ENCODE measurements at regions of chr10 and their contacts with region 1.

Region 1: DNA sequence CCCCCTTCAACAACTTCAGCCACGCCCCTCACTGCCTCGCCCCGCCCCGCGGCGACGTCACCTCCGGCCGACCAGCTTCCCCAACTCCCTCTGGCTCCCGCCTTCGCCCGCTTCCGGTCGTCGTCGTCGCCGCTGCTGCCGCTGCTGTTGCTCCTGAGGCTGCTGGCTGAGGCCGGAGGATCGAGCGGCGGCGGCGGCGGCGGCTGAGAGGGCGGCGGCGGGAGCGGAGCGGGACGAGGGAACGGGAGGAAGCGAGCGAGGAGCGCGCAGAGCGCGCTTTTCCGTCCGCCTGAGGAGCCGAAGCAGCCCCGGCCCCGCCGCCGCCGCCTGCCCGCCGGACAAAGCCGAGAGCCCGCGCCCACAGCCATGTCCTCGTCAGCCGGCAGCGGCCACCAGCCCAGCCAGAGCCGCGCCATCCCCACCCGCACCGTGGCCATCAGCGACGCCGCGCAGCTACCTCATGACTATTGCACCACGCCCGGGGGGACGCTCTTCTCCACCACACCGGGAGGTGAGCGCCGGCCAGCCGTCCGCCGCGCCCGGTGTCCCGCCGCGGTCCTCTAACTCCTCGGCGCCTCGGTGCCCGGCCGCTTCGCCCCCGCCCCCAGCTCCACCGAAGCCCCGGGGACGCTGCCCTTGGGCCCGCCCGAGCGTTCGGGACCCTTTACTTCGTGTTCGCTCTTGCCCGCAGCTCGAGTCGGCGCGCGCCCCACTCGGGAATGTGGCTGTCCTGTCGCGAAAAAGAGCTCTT is at the start of gene EIF4EBP2:
- DNase-seq: peak; percentile 99
- H3K4me3 Mint-ChIP-seq: peak within 1 kb of the TSS; percentile 98
- H3K27ac Mint-ChIP-seq: peak within 1 kb of the TSS; percentile 90
- H3K4me1 Mint-ChIP-seq: peaks cover 37% of the 10 kb centered on the region
- H3K27me3 Mint-ChIP-seq: no peaks in the 10 kb centered on the region
- total RNA-seq, gene EIF4EBP2: 20.0 to 21.0 TPM

Region 2: DNA sequence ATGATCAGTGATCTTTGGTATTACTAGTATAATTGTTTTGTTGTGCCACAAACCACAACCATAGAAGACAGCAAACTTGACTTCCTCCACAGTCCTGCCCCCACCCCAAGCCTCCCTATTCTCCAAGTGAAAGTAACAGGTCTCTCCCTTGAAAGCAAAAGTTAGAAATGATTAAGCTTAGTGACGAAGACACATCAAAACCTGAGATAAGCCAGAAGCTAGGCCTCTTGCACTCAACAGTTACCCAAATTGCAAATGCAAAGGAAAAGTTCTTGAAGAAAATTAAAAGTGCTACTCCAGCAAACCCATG is 241.4 kb before region 1 on chr10:
- CTCF ChIA-PET with region 1: no interaction called
- intact Hi-C with region 1: loop called (anchors 5 kb)
- DNase-seq: peak; percentile 87
- H3K4me3 Mint-ChIP-seq: peak overlapping the region; percentile 20
- H3K27ac Mint-ChIP-seq: peak overlapping the region; percentile 95
- H3K4me1 Mint-ChIP-seq: peaks cover 65% of the 10 kb centered on the region
- H3K27me3 Mint-ChIP-seq: no peaks in the 10 kb centered on the region

Region 3: GRCh38 chr10:70265032-70265689 is 139.1 kb before region 1 on chr10:
- CTCF ChIA-PET with region 1: no interaction called
- intact Hi-C with region 1: no loop called
- DNase-seq: peak; percentile 35
- H3K4me3 Mint-ChIP-seq: no peak overlapping the region
- H3K27ac Mint-ChIP-seq: no peak overlapping the region
- H3K4me1 Mint-ChIP-seq: peaks cover 7% of the 10 kb centered on the region
- H3K27me3 Mint-ChIP-seq: peaks cover 2% of the 10 kb centered on the region

Region 4: GRCh38 chr10:70381471-70382421 is 22.5 kb before region 1 on chr10:
- CTCF ChIA-PET with region 1: interaction called, 7 read pairs
- intact Hi-C with region 1: loop called (anchors 1 kb)
- DNase-seq: peak; percentile 42
- H3K4me3 Mint-ChIP-seq: peak overlapping the region; percentile 84
- H3K27ac Mint-ChIP-seq: no peak overlapping the region
- H3K4me1 Mint-ChIP-seq: peaks cover 10% of the 10 kb centered on the region
- H3K27me3 Mint-ChIP-seq: peaks cover 2% of the 10 kb centered on the region

Region 5: GRCh38 chr10:70417568-70417967 is 13.4 kb after region 1 on chr10:
- CTCF ChIA-PET with region 1: interaction called, 3 read pairs
- intact Hi-C with region 1: loop called (anchors 1 kb)
- DNase-seq: no peak
- H3K4me3 Mint-ChIP-seq: no peak overlapping the region
- H3K27ac Mint-ChIP-seq: peak overlapping the region; percentile 23
- H3K4me1 Mint-ChIP-seq: peaks cover 29% of the 10 kb centered on the region
- H3K27me3 Mint-ChIP-seq: no peaks in the 10 kb centered on the region

Region 6: DNA sequence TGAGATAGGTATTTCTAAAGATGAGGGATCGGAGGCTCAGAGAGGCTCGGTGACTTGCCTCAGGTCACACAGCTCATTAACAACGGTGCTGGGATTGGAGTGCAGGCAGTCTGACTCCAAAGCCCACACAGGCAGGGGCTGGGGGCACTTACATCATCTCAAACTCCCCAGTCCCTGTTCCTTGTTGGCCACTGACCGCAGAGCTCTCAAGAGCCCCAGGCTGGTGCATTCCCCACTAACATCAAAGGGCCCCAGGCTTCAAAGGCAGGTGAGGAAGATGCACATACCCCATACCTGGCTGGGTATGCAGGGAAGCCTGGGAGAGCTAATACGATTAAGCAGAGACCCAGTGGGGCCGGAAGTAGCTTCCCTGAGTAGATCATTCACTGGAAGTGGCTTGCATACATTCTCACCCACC is 51.0 kb after region 1 on chr10:
- CTCF ChIA-PET with region 1: no interaction called
- intact Hi-C with region 1: no loop called
- DNase-seq: no peak
- H3K4me3 Mint-ChIP-seq: no peak overlapping the region
- H3K27ac Mint-ChIP-seq: no peak overlapping the region
- H3K4me1 Mint-ChIP-seq: peaks cover 5% of the 10 kb centered on the region
- H3K27me3 Mint-ChIP-seq: peaks cover 35% of the 10 kb centered on the region

Region 7: GRCh38 chr10:70493660-70494234 is 89.5 kb after region 1 on chr10:
- CTCF ChIA-PET with region 1: no interaction called
- intact Hi-C with region 1: no loop called
- DNase-seq: no peak
- H3K4me3 Mint-ChIP-seq: no peak overlapping the region
- H3K27ac Mint-ChIP-seq: no peak overlapping the region
- H3K4me1 Mint-ChIP-seq: peaks cover 15% of the 10 kb centered on the region
- H3K27me3 Mint-ChIP-seq: no peaks in the 10 kb centered on the region

Region 8: GRCh38 chr10:70503776-70504175 is 99.6 kb after region 1 on chr10:
- CTCF ChIA-PET with region 1: no interaction called
- intact Hi-C with region 1: no loop called
- DNase-seq: no peak
- H3K4me3 Mint-ChIP-seq: no peak overlapping the region
- H3K27ac Mint-ChIP-seq: no peak overlapping the region
- H3K4me1 Mint-ChIP-seq: no peaks in the 10 kb centered on the region
- H3K27me3 Mint-ChIP-seq: no peaks in the 10 kb centered on the region

Region 9: DNA sequence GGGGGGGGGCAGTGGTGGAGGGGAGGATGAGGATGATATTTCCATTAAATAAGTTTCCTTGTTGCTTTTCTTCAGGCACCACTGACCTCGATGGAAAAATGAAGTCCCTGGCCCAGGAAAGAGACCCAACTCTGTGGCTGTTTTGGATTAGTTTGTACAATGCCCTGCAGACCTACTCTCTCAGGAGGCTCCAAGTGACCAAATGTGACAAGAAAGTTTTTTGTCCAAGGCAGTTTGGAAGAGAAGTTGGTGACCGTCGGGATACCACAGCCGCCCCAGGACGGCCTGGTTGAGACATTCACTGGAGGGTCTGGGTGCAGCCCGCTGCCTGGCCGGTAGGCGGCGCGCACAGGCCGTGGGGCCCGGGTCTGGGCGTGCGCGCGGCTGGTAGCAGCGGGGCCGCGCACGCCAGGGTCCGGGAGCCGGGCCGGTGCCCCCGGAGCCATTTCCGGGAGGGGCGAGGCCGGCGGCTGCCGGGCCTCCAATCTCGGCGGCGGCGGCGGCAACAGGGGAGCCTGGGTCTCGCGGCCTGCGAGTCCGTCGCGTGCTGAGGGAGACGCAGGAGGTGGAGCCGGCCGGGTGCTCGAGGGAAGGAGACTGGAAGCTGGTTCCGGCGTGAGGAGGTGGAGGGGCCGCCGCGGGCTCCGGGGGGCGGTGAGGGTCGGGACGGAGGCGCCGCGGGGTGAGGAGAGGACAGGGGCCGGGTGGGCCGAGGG is 411.5 kb after region 1 on chr10 and contains the start of gene SGPL1:
- CTCF ChIA-PET with region 1: no interaction called
- intact Hi-C with region 1: loop called (anchors 1 kb)
- DNase-seq: peak; percentile 86
- H3K4me3 Mint-ChIP-seq: peak within 1 kb of the TSS; percentile 82
- H3K27ac Mint-ChIP-seq: peak within 1 kb of the TSS; percentile 76
- H3K4me1 Mint-ChIP-seq: peaks cover 37% of the 10 kb centered on the region
- H3K27me3 Mint-ChIP-seq: no peaks in the 10 kb centered on the region
- total RNA-seq, gene SGPL1: 14.8 to 17.2 TPM

Measured in activated naive CD4-positive, alpha-beta T cell treated with anti-CD3 and anti-CD28 coated beads for 36 hours (primary cell).